CD4-positive, alpha-beta T cell (primary cell): ENCODE measurements at regions of chr14 and their contacts with region 1.

Region 1: DNA sequence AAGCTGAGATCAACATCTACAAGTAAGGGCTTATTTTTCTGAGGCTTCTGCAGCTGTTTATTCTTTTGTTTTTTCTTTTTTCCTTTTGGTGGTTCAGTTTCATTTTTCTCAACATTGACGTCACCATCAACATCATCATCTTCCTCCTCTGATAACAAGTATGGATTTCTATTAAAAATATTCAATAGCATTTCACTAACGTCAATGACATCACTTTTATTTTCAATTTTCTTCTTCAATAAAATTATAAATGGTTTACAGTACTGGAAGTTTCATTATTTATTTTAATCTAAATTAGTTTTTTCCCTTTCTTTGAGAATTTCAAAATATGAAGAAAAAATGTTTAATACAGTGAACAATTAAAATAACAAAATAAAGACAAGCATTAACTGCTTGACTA is 23.9 kb downstream of the NEMF start:
- DNase-seq: no peak
- ATAC-seq: no peak
- H3K4me3 ChIP-seq: no peak overlapping the region
- H3K4me3 Mint-ChIP-seq: no peak overlapping the region
- H3K27ac ChIP-seq: no peak overlapping the region
- H3K27ac Mint-ChIP-seq: no peak overlapping the region
- H3K4me1 ChIP-seq: no peaks in the 10 kb centered on the region
- H3K4me1 Mint-ChIP-seq: peaks cover 5% of the 10 kb centered on the region
- H3K27me3 ChIP-seq: no peaks in the 10 kb centered on the region
- H3K27me3 Mint-ChIP-seq: no peaks in the 10 kb centered on the region
- CTCF ChIP-seq: no peak

Region 2: DNA sequence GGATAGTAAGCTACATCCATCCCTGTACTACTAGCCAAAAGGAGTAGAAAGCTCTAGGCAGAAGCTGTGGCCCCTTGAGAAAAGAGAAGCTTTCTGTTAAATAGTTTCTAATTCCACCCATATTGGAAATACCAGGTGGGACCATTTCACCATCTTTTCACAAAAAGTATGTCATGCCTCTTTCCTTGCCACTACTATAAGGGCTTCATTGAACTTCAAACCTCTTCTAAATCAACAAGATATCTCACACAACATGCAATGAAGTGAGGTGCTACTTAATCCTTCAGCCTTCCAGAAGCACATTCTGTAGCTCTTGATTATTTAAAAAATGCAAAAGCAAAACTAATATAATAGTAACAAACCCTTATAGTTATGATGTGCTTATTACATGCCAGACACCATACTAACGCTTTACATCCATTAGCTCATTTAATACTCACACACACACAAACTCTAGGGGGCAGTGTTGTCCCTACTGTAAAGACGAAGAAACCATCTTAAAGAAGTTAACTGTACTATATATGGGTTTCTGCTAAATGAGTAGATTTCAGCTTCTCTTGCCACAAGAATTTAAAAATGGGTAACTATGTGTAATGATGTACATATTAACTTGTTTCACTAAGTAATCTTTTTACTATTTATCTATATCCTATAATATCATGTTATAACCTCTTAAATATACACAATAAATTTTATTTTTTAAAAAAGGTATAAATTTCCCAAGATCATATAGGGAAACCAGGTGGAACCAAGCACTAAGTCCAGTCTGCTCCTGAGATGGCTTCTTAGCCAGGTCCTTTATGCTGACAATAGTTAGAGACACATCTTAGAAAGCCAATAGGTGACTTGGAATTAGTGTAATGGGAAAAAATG is 366.9 kb before region 1 on chr14:
- CTCF ChIA-PET with region 1: interaction called, 8 read pairs
- POLR2A ChIA-PET with region 1: no interaction called
- intact Hi-C with region 1: loop called (anchors 5 kb)
- DNase-seq: peak in 13 of 14 experiments; percentile 4 to 86 (median 46)
- ATAC-seq: peak; percentile 97
- H3K4me3 ChIP-seq: no peak overlapping the region
- H3K4me3 Mint-ChIP-seq: no peak overlapping the region
- H3K27ac ChIP-seq: no peak overlapping the region
- H3K27ac Mint-ChIP-seq: no peak overlapping the region
- H3K4me1 ChIP-seq: no peaks in the 10 kb centered on the region
- H3K4me1 Mint-ChIP-seq: no peaks in the 10 kb centered on the region
- H3K27me3 ChIP-seq: no peaks in the 10 kb centered on the region
- H3K27me3 Mint-ChIP-seq: peaks cover 2% of the 10 kb centered on the region
- CTCF ChIP-seq: peak; percentile 73

Region 3: DNA sequence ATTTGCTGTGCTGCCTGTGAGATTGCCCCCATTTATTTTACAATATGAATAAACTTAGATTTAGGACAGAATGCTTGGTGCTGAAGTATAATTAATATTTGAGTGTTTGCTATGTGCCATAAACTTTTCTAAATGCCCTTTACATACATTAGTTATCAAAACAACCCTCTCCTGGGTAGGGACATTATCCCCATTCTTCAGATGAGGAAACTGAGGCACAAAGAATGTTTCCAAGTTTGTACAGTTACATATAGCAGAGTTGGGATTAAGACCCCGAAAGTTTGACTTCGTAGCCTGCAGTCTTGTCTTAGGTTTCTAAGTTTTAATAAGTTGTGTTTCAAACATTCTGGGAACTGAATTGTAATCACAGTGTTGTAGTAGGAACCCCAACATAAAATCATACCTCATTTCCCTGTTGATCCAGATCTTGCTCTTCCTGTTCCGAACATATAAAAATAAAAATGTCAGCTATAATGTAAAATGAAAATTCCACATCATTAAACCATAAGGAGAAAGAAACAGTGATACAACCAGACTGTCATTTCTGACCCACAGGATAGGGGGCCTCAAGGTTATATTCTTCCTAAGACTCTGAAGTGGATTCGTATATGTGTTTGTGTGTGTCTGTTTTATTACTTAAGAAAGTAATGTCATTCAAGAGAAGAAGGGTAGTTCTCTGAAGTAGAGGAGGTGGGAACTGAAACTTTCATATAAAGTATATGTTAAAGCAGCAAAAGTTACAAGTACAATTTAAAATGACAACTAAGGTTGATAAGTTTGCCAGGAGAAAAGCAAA is 42.1 kb before region 1 on chr14:
- CTCF ChIA-PET with region 1: interaction called, 4 read pairs
- POLR2A ChIA-PET with region 1: no interaction called
- intact Hi-C with region 1: loop called in 1 of 2 experiments (anchors 10 kb)
- DNase-seq: no peak
- ATAC-seq: no peak
- H3K4me3 ChIP-seq: no peak overlapping the region
- H3K4me3 Mint-ChIP-seq: no peak overlapping the region
- H3K27ac ChIP-seq: no peak overlapping the region
- H3K27ac Mint-ChIP-seq: no peak overlapping the region
- H3K4me1 ChIP-seq: no peaks in the 10 kb centered on the region
- H3K4me1 Mint-ChIP-seq: peaks cover 5% of the 10 kb centered on the region
- H3K27me3 ChIP-seq: no peaks in the 10 kb centered on the region
- H3K27me3 Mint-ChIP-seq: no peaks in the 10 kb centered on the region
- CTCF ChIP-seq: no peak

Region 4: GRCh38 chr14:49808780-49809179 is 19.9 kb before region 1 on chr14:
- CTCF ChIA-PET with region 1: no interaction called
- POLR2A ChIA-PET with region 1: interaction called, 3 read pairs
- intact Hi-C with region 1: loop called in 1 of 2 experiments (anchors 1 kb)
- DNase-seq: no peak
- ATAC-seq: no peak
- H3K4me3 ChIP-seq: no peak overlapping the region
- H3K4me3 Mint-ChIP-seq: no peak overlapping the region
- H3K27ac ChIP-seq: no peak overlapping the region
- H3K27ac Mint-ChIP-seq: peak overlapping the region; percentile 56
- H3K4me1 ChIP-seq: no peaks in the 10 kb centered on the region
- H3K4me1 Mint-ChIP-seq: peaks cover 7% of the 10 kb centered on the region
- H3K27me3 ChIP-seq: no peaks in the 10 kb centered on the region
- H3K27me3 Mint-ChIP-seq: no peaks in the 10 kb centered on the region
- CTCF ChIP-seq: no peak